Aorta (tissue), 5 donors: ENCODE measurements at regions of chr13 and their contacts with region 1.

Region 1: DNA sequence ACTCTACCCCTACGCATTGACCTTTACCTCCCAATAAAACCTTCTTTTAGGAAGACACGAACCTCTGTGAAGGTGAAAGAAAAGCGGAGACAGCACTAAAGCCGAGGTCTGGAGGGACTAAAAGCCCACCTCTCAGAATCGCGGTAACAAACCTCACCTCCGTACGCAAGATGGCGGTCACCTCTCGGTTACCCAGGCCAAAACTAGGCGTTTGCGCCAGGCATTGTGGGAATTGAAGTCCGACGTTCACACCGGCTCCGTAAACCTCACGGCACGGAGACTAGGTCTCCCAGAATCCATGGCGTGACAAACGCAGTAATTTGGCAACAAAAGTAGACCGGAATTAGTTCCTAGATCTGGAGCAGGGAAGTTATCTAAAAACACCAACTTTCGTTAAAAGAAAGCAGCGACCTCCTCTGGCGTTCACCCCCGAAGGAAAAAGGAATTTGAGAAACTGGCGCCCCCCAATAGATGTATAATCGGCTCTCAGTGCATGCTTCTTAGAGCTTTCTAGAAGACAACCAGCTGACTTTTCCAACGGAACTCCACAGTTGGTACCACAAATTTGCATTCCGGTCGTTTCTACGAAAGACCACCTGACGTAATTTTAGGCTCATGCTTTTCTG is at the start of gene N4BP2L2:
- DNase-seq: peak; percentile 96 to 97
- ATAC-seq: peak; percentile 99
- H3K4me3 ChIP-seq: peak within 1 kb of the TSS; percentile 92
- H3K27ac ChIP-seq: peak within 1 kb of the TSS; percentile 70 to 95
- H3K4me1 ChIP-seq: peaks cover 2 to 4% of the 10 kb centered on the region in 2 donors
- H3K27me3 ChIP-seq: no peaks in the 10 kb centered on the region
- total RNA-seq, gene N4BP2L2: 191 to 239 TPM

Region 2: GRCh38 chr13:32315238-32316027 is 223.3 kb before region 1 on chr13 and contains the starts of genes BRCA2 and ZAR1L:
- intact Hi-C with region 1: loop called in 1 of 2 experiments (anchors 5 kb)
- DNase-seq: peak; percentile 96 to 97
- ATAC-seq: peak; percentile 98
- H3K4me3 ChIP-seq: peak within 1 kb of the TSS; percentile 56 to 89
- H3K27ac ChIP-seq: peak within 1 kb of the TSS; percentile 65 to 98
- H3K4me1 ChIP-seq: no peaks in the 10 kb centered on the region
- H3K27me3 ChIP-seq: no peaks in the 10 kb centered on the region
- total RNA-seq, gene BRCA2: 3.2 to 4.3 TPM
- total RNA-seq, gene ZAR1L: not detected